T-cell (primary cell): ENCODE measurements at regions of chr2 and their contacts with region 1.

Region 1: DNA sequence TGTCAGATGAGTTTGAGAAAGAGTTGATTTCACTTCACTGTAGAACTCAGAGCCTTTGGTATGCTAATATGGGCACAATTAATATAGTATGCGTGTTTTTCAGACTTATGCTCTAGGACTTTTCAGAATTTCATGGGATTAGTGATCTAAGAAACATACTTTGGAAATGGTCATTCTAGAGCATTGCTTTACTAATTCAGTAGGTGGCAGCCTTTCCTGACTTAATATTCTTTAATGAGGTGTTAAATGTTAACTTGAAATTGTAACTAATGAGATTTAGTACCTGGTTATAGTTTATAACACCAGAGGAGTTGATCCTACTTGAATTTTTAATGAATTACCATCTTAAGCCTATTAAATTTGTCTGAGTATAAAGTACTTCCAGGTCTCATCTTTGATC is 28.4 kb downstream of the ACTR2 start:
- DNase-seq: no peak
- ATAC-seq: no peak
- H3K4me3 ChIP-seq: no peak overlapping the region
- H3K4me3 Mint-ChIP-seq: no peak overlapping the region
- H3K27ac ChIP-seq: no peak overlapping the region
- H3K27ac Mint-ChIP-seq: no peak overlapping the region
- H3K4me1 ChIP-seq: no peaks in the 10 kb centered on the region
- H3K4me1 Mint-ChIP-seq: peaks cover 21 to 34% (median 30%) of the 10 kb centered on the region in 3 donors
- H3K27me3 ChIP-seq: no peaks in the 10 kb centered on the region
- H3K27me3 Mint-ChIP-seq: no peaks in the 10 kb centered on the region

Region 2: GRCh38 chr2:65056215-65057053 is 199.6 kb before region 1 on chr2 and contains the start of gene CEP68:
- CTCF ChIA-PET with region 1: no interaction called
- POLR2A ChIA-PET with region 1: interaction called in 1 of 2 experiments, 12 read pairs
- DNase-seq: peak; percentile 90 to 97 (median 94)
- ATAC-seq: peak; percentile 90 to 93 (median 90)
- H3K4me3 ChIP-seq: peak within 1 kb of the TSS; percentile 52 to 86
- H3K4me3 Mint-ChIP-seq: peak within 1 kb of the TSS; percentile 95 to 97 (median 96)
- H3K27ac ChIP-seq: peak within 1 kb of the TSS; percentile 63
- H3K27ac Mint-ChIP-seq: peak within 1 kb of the TSS; percentile 92 to 94
- H3K4me1 ChIP-seq: peaks cover 20 to 59% of the 10 kb centered on the region in 2 experiments
- H3K4me1 Mint-ChIP-seq: peaks cover 70 to 74% (median 72%) of the 10 kb centered on the region in 3 donors
- H3K27me3 ChIP-seq: no peaks in the 10 kb centered on the region
- H3K27me3 Mint-ChIP-seq: no peaks in the 10 kb centered on the region
- total RNA-seq, gene CEP68: 24.1 to 41.4 (median 37.4) TPM

Region 3: GRCh38 chr2:65220432-65221131 is 35.5 kb before region 1 on chr2:
- CTCF ChIA-PET with region 1: no interaction called
- POLR2A ChIA-PET with region 1: no interaction called
- DNase-seq: no peak
- ATAC-seq: no peak
- H3K4me3 ChIP-seq: no peak overlapping the region
- H3K4me3 Mint-ChIP-seq: no peak overlapping the region
- H3K27ac ChIP-seq: no peak overlapping the region
- H3K27ac Mint-ChIP-seq: no peak overlapping the region
- H3K4me1 ChIP-seq: no peaks in the 10 kb centered on the region
- H3K4me1 Mint-ChIP-seq: no peaks in the 10 kb centered on the region
- H3K27me3 ChIP-seq: no peaks in the 10 kb centered on the region
- H3K27me3 Mint-ChIP-seq: no peaks in the 10 kb centered on the region

Region 4: GRCh38 chr2:65300134-65300760 is 44.2 kb after region 1 on chr2:
- CTCF ChIA-PET with region 1: no interaction called
- POLR2A ChIA-PET with region 1: interaction called in 1 of 2 experiments, 11 read pairs
- DNase-seq: peak in 2 of 35 experiments; percentile 7 to 11
- ATAC-seq: peak in 1 of 4 experiments; percentile 1
- H3K4me3 ChIP-seq: peak overlapping the region; percentile 23 to 77
- H3K4me3 Mint-ChIP-seq: peak overlapping the region; percentile 74 to 88 (median 75)
- H3K27ac ChIP-seq: no peak overlapping the region
- H3K27ac Mint-ChIP-seq: peak overlapping the region; percentile 86 to 91
- H3K4me1 ChIP-seq: peaks cover 31 to 34% of the 10 kb centered on the region in 2 experiments
- H3K4me1 Mint-ChIP-seq: peaks cover 31 to 43% (median 38%) of the 10 kb centered on the region in 3 donors
- H3K27me3 ChIP-seq: peaks cover 0 to 7% of the 10 kb centered on the region in 2 experiments
- H3K27me3 Mint-ChIP-seq: no peaks in the 10 kb centered on the region

Region 5: DNA sequence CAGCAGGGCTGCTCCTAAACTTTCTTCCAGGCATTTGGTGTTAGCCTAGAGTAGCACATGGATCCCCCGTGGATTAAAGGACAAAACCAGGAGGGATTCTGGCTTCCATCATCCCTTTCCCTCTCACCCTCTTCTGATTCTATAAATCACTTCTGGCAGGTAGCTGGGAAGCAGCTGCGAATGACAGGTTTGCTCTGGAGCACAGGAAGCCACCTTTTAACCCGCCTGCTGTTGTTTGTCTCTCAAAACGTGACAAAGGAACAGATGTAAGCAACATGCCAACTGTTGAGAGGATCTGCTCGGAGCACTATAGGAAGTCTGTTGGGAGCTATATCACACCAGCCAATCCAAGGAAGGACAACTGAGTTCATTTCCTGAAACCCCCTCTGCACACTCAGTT is 73.5 kb after region 1 on chr2:
- CTCF ChIA-PET with region 1: no interaction called
- POLR2A ChIA-PET with region 1: no interaction called
- DNase-seq: no peak
- ATAC-seq: no peak
- H3K4me3 ChIP-seq: no peak overlapping the region
- H3K4me3 Mint-ChIP-seq: no peak overlapping the region
- H3K27ac ChIP-seq: no peak overlapping the region
- H3K27ac Mint-ChIP-seq: no peak overlapping the region
- H3K4me1 ChIP-seq: no peaks in the 10 kb centered on the region
- H3K4me1 Mint-ChIP-seq: no peaks in the 10 kb centered on the region
- H3K27me3 ChIP-seq: no peaks in the 10 kb centered on the region
- H3K27me3 Mint-ChIP-seq: no peaks in the 10 kb centered on the region